Naive thymus-derived CD8-positive, alpha-beta T cell (primary cell): ENCODE measurements at regions of chr20 and their contacts with region 1.

Region 1: DNA sequence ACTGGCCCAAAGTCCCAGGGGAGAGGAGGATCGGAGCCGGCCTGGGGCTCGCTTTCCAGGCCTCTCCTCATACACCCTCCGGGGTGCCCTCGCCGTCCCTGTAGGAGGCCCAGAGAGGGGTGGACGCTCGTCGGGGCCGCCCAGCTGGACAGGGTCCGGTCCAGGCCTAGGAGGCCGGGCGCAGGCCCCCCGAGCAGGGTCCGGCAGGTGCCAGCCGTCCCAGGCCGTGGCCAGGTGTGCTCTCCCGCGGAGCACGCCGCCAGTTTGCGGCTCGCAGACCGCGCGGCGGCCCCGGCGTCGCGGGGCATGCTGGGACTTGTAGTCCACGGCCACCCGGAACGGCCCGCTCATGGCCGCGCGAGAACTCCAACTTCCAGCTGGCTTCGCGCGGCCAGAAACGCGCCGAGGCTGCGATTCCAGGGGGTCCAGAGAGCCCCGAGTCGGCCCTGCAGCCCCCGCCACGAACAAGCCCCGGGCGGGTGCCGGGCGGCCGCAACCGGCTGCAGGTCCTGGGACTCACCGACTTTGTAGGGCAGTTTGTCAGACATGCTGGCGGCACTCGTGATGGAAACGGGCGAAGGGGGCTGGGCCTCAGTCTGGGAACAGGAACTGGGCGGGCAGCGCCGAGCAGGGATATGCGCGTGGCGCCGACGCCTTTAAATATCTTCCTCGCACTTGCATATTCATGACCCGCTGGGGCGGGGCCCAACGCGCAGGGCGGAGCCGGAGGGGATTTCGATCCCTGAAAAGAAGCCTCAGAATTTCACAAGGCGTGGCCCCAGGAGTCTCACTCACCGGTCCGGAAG is at the start of gene AHCY:
- DNase-seq: peak; percentile 82 to 98 (median 90)
- ATAC-seq: peak; percentile 93 to 94
- H3K4me3 Mint-ChIP-seq: peak within 1 kb of the TSS; percentile 87 to 98 (median 94)
- H3K27ac Mint-ChIP-seq: peak within 1 kb of the TSS; percentile 84 to 97 (median 94)
- H3K4me1 Mint-ChIP-seq: peaks cover 5 to 22% (median 16%) of the 10 kb centered on the region in 4 donors
- H3K27me3 Mint-ChIP-seq: no peaks in the 10 kb centered on the region
- polyA plus RNA-seq, gene AHCY: 30.5 to 40.8 (median 37.4) TPM

Region 2: GRCh38 chr20:34285450-34285849 is 17.5 kb before region 1 on chr20:
- POLR2A ChIA-PET with region 1: no interaction called
- DNase-seq: no peak
- ATAC-seq: no peak
- H3K4me3 Mint-ChIP-seq: no peak overlapping the region
- H3K27ac Mint-ChIP-seq: peak overlapping the region in 1 of 10 donors; percentile 19
- H3K4me1 Mint-ChIP-seq: no peaks in the 10 kb centered on the region
- H3K27me3 Mint-ChIP-seq: no peaks in the 10 kb centered on the region

Region 3: DNA sequence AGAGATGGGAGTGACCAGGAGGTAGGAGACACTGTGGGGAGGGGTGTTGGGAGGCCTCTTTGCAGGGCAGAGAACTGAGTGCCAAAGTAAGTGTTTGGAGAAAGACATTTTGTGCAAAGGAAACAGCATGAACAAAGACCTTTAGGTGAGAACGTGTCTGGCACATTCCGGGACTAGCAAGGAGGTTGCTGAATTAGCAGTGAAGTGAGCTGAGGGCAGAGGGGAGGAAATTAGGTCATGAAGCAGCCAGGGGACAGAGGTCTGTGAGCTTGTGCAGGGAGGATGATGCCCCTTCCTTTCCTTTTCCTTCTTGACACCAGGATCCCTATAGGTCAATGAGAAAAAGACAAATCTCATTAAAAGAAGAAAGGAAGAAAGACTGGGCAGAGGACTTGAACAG is 21.6 kb after region 1 on chr20:
- POLR2A ChIA-PET with region 1: no interaction called
- DNase-seq: no peak
- ATAC-seq: no peak
- H3K4me3 Mint-ChIP-seq: peak overlapping the region in 1 of 10 donors; percentile 29
- H3K27ac Mint-ChIP-seq: peak overlapping the region in 5 of 10 donors; percentile 1 to 76 (median 17)
- H3K4me1 Mint-ChIP-seq: peaks cover 0 to 6% (median 0%) of the 10 kb centered on the region in 4 donors
- H3K27me3 Mint-ChIP-seq: peaks cover 3 to 10% (median 9%) of the 10 kb centered on the region in 5 donors

Region 4: DNA sequence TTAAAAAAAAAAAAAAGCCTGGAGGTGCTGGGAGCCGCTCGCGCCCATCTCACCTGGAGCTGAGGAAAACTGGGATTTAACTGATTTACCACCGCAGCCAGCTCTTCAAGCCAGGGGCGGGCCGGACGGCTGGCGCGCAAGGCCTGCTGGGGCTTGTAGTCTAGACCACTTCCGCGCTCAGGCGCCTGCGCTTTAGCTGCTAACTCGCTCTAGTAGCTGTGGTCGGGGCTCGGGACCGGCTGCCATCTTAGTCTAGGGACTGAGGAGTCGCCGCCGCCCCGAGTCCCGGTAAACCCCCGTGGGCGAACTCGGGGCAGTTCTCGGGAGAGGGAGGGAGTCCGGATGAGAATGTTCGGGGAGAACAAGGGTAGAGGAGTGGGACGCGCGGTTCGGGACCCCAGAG is 60.1 kb after region 1 on chr20 and contains the start of gene ITCH:
- POLR2A ChIA-PET with region 1: interaction called, 11 read pairs
- DNase-seq: peak; percentile 83 to 95 (median 88)
- ATAC-seq: peak; percentile 98 to 99
- H3K4me3 Mint-ChIP-seq: peak within 1 kb of the TSS; percentile 84 to 100 (median 100)
- H3K27ac Mint-ChIP-seq: peak within 1 kb of the TSS; percentile 97 to 100 (median 98)
- H3K4me1 Mint-ChIP-seq: peaks cover 18 to 50% (median 41%) of the 10 kb centered on the region in 4 donors
- H3K27me3 Mint-ChIP-seq: no peaks in the 10 kb centered on the region
- polyA plus RNA-seq, gene ITCH: 12.6 to 19.6 (median 12.8) TPM

Region 5: GRCh38 chr20:34516247-34517113 is 213.6 kb after region 1 on chr20 and contains the start of gene DYNLRB1:
- POLR2A ChIA-PET with region 1: interaction called, 19 read pairs
- DNase-seq: peak; percentile 88 to 98 (median 94)
- ATAC-seq: peak; percentile 79 to 87
- H3K4me3 Mint-ChIP-seq: peak within 1 kb of the TSS; percentile 97 to 100 (median 99)
- H3K27ac Mint-ChIP-seq: peak within 1 kb of the TSS; percentile 96 to 99 (median 98)
- H3K4me1 Mint-ChIP-seq: peaks cover 25 to 67% (median 40%) of the 10 kb centered on the region in 4 donors
- H3K27me3 Mint-ChIP-seq: no peaks in the 10 kb centered on the region
- polyA plus RNA-seq, gene DYNLRB1: 216 to 275 (median 268) TPM